HEK293 (cell line): ENCODE measurements at regions of chr12 and their contacts with region 1.

Region 1: GRCh38 chr12:7933255-7933729 is 2.7 kb downstream of the SLC2A3 start:
- H3K4me3 ChIP-seq: peak overlapping the region; percentile 12
- H3K27ac ChIP-seq: no peak overlapping the region
- H3K4me1 ChIP-seq: peaks cover 2% of the 10 kb centered on the region; the same call in 1 of the 2 replicates
- CTCF ChIP-seq: peak; percentile 77

Region 2: DNA sequence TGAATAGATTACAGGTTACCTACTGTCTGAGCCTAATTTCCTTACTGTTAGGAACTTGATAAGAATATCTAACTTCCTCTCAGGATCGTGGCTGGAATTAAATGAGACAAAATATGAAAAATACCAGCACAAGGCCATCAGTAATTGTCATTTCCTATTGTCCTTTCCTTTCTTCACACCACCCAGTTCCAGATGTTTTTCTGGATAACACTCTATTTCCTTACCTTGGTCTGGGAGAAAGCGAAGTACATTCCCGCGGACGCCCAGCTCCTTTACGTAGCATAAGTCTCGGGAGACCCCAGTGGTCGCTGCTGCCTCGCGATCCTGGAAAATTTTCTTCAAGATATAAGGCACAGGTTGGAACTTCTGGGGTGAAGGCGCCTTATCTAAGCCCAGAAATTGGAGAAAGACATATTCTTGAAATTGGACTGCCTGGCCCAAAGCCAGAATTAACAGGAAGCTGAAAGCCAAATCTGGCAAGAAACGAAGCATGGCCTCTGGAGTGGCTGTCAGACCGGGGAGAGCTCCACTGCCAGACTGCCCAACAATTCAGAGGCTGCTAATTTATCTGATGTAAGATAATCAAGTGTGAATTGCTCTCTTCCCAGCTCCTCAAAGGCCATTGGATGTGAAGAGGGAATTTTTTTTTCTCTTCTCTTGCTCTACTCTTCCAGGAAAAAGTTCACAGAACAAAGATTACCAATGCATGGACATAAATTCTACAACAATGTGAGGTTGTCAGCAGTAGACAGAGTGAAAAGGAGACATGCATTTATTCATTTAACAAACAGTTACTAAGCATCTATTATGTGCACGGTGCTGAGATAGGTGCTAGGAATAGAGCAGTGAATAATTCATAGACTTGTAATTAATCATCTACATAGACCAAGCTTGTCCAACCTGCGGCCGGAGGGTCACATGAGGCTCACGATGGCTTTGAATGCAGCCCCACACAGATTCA is 237.8 kb before region 1 on chr12 and contains the start of gene GDF3:
- CTCF ChIA-PET with region 1: no interaction called
- POLR2A ChIA-PET with region 1: no interaction called
- H3K4me3 ChIP-seq: no peak within 1 kb of the TSS
- H3K27ac ChIP-seq: no peak within 1 kb of the TSS
- H3K4me1 ChIP-seq: peaks cover 5% of the 10 kb centered on the region
- CTCF ChIP-seq: no peak

Region 3: DNA sequence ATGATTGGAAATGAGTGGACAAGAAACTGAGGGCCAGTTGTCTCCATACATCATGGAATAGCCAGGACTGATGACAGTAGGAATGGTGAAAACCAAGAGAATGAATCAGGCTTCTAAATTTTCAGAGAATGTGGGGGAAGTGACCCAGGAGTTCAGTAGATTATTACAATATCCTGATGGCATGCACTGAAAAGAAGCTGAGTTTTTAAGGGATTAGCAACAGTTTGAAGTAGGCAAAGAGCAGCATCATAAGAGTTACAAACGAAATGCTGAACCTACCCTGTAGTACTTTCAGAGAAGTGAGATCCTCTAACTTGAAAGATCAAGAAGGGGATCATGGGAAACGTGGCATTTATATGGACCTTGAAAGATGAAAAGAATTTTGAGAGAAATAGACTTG is 73.7 kb before region 1 on chr12:
- CTCF ChIA-PET with region 1: interaction called, 49 read pairs
- POLR2A ChIA-PET with region 1: interaction called, 12 read pairs
- H3K4me3 ChIP-seq: no peak overlapping the region
- H3K27ac ChIP-seq: no peak overlapping the region
- H3K4me1 ChIP-seq: no peaks in the 10 kb centered on the region
- CTCF ChIP-seq: no peak

Region 4: GRCh38 chr12:7916936-7917335 is 16.4 kb before region 1 on chr12:
- CTCF ChIA-PET with region 1: interaction called, 19 read pairs
- POLR2A ChIA-PET with region 1: interaction called, 4 read pairs
- H3K4me3 ChIP-seq: no peak overlapping the region
- H3K27ac ChIP-seq: no peak overlapping the region
- H3K4me1 ChIP-seq: no peaks in the 10 kb centered on the region
- CTCF ChIP-seq: no peak

Region 5: DNA sequence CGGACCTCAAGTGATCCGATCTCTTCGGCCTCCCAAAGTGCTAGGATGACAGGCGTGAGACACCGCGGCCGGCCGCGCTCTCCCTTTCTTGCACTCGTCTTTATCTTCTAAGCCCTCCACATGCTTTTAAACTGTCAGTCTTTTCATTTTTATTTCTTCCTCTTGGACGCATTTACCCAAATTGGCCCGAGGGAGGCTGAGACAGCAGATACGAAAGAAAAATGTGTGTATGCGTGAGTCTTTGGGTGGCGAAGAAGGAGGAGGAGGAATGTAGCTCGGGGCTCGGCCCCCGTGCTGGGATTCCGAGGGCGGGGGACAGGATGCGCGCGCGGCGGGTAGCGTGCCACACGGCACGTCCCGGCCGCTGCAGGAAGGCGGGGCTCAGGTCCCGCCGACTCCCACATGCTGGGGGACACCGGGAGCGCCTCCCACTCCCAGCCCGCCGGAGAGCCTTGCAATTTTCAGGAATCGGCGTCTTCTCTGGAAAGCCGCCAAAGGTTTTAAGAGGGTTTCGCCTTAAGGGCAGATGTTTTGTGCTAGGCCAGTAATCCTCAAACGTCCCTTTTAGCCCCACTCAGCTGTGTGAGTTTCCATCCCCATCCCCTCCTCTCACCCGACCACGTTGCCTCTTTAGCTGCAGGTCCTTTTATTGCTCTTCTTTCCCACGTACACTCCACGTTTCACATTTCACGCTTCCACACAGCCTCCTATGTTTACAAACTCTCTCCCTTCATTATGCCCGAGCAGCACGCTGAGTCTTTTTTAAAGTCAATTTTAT is 37.4 kb after region 1 on chr12:
- CTCF ChIA-PET with region 1: interaction called, 14 read pairs
- POLR2A ChIA-PET with region 1: interaction called, 31 read pairs
- H3K4me3 ChIP-seq: peak overlapping the region; percentile 34
- H3K27ac ChIP-seq: peak overlapping the region; percentile 89
- H3K4me1 ChIP-seq: no peaks in the 10 kb centered on the region
- CTCF ChIP-seq: peak; percentile 22; the same call in 1 of the 2 replicates

Region 6: DNA sequence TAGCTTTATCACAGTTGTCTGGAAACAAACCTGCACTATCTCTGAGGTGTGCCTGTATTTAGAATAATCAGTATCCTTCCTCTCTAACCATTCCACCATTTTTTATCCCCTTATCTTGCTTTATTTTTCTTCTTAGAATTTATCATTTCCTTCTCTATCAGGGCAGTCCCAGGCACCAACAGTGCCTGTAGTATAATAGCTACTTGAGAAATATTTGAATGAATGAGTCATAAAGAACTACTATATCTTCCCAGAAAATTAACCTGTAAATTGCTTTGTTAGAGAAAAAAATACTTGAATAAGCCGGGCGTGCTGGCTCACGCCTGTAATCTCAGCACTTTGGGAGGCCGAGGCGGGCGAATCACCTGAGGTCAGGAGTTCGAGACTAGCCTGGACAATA is 78.0 kb after region 1 on chr12:
- CTCF ChIA-PET with region 1: interaction called, 3 read pairs
- POLR2A ChIA-PET with region 1: interaction called, 12 read pairs
- H3K4me3 ChIP-seq: no peak overlapping the region
- H3K27ac ChIP-seq: no peak overlapping the region
- H3K4me1 ChIP-seq: no peaks in the 10 kb centered on the region
- CTCF ChIP-seq: no peak

Region 7: DNA sequence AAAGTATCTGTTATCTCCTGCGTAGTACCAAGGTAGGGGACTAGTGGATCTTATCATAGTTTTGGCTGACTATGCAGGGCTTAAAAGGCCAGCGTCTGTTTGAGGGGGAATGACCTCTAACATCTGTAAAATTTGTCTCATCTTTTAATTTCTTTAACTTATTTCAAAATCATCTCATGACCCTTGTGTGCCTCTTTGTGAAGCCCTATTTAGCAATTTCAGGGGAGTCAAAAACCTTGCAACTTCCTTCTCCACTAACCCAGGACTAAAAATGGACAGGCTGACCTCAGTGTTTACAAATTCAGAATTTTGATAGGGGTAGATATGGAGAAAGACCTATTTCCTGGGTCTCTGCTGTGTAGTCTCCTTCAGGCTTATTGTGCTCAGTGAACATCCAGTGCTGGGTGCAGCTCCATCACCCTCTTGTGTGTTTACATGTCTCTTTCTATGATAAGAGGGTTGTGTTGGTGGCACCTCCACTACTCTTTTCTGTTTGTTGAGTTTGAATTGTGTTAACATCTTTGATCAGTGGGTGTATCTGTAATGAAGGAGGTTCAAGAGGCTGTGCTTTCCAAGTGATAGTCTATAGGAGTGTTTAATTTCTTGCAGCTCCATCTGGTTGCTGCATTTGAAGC is 163.1 kb after region 1 on chr12:
- CTCF ChIA-PET with region 1: no interaction called
- POLR2A ChIA-PET with region 1: no interaction called
- H3K4me3 ChIP-seq: no peak overlapping the region
- H3K27ac ChIP-seq: no peak overlapping the region
- H3K4me1 ChIP-seq: no peaks in the 10 kb centered on the region
- CTCF ChIP-seq: no peak